PC-9 (cell line): ENCODE measurements at regions of chr6 and their contacts with region 1.

Region 1: DNA sequence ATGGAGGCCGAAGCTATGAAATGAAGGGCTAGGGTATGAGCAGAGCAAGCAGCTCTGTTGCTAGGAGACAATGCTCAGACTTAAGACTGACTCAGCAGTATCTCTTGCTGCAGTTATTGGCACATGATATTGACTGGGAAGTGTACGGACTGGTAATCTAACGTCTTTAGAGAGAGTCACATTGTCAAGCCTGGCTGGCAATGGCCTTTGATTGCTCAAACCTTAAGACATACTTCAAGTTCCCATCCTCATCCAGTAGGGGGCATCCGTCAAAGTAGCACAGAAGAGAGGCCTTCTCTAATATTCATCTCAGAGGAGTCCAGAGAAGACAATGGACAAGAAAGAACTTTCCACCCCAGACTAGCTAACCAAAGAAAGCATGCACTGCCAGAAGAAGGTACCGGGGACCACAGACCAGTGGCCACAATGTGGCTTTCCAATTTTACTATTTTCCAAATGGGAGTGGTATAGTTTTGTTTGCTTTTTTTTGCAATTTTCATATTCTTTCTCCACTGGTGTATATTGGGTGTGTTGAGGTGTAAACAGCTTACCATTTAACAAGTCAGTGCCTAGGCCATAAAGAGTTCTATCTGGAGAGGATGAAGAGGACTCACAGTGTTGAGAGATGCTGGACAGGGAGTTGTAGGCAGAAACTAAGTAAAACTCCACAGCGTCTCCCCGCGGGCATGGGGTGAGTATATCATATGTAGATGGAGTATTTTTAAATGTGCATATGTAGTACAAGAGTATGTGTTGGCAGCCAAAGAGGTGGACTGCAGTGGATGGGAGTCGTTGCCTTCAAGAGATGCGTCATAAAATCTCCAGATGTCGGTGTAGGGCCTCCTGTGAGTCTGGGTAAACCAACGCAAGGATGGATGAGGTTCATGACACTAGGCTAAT is 36.7 kb downstream of the LRFN2 start:
- DNase-seq: no peak
- H3K4me3 ChIP-seq: no peak overlapping the region
- H3K27ac ChIP-seq: no peak overlapping the region
- H3K4me1 ChIP-seq: no peaks in the 10 kb centered on the region
- H3K27me3 ChIP-seq: peaks cover 18% of the 10 kb centered on the region
- CTCF ChIP-seq: peak; percentile 71

Region 2: GRCh38 chr6:40342723-40343122 is 207.7 kb before region 1 on chr6:
- CTCF ChIA-PET with region 1: no interaction called
- POLR2A ChIA-PET with region 1: no interaction called
- intact Hi-C with region 1: no loop called
- DNase-seq: no peak
- H3K4me3 ChIP-seq: no peak overlapping the region
- H3K27ac ChIP-seq: no peak overlapping the region
- H3K4me1 ChIP-seq: no peaks in the 10 kb centered on the region
- H3K27me3 ChIP-seq: peaks cover 77% of the 10 kb centered on the region
- CTCF ChIP-seq: no peak

Region 3: DNA sequence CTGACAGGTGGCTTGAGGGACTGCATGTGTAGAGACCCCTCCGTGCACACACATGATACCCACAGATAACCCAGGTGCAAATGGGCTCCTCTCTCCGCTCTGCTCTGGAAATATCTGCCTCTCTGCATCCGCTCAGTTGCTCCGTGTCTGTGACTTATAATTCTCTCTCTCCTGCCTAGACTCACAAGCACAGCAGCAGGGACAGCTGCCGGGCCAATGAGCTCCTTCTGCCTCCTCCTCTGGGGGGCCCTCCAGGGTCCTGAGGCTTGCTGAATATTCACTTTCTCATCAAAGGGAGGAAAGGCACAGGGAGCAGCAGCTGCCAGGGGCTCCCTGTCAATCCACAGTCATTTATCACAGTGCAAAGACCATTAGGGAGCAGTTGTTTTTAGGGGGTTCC is 12.7 kb after region 1 on chr6:
- CTCF ChIA-PET with region 1: no interaction called
- POLR2A ChIA-PET with region 1: no interaction called
- intact Hi-C with region 1: no loop called
- DNase-seq: no peak
- H3K4me3 ChIP-seq: no peak overlapping the region
- H3K27ac ChIP-seq: no peak overlapping the region
- H3K4me1 ChIP-seq: no peaks in the 10 kb centered on the region
- H3K27me3 ChIP-seq: peaks cover 25% of the 10 kb centered on the region
- CTCF ChIP-seq: no peak

Region 4: GRCh38 chr6:41021832-41022231 is 471.4 kb after region 1 on chr6:
- CTCF ChIA-PET with region 1: no interaction called
- POLR2A ChIA-PET with region 1: no interaction called
- intact Hi-C with region 1: loop called (anchors 5 kb)
- DNase-seq: peak; percentile 46 to 56
- H3K4me3 ChIP-seq: no peak overlapping the region
- H3K27ac ChIP-seq: no peak overlapping the region
- H3K4me1 ChIP-seq: peaks cover 12% of the 10 kb centered on the region; the same call in 1 of the 2 replicates
- H3K27me3 ChIP-seq: no peaks in the 10 kb centered on the region
- CTCF ChIP-seq: 0 out of 2 replicates have a peak, but pooled peaks have one; percentile 26